ENCODE measurements at regions of chr3 and their contacts with region 1.

Region 1: DNA sequence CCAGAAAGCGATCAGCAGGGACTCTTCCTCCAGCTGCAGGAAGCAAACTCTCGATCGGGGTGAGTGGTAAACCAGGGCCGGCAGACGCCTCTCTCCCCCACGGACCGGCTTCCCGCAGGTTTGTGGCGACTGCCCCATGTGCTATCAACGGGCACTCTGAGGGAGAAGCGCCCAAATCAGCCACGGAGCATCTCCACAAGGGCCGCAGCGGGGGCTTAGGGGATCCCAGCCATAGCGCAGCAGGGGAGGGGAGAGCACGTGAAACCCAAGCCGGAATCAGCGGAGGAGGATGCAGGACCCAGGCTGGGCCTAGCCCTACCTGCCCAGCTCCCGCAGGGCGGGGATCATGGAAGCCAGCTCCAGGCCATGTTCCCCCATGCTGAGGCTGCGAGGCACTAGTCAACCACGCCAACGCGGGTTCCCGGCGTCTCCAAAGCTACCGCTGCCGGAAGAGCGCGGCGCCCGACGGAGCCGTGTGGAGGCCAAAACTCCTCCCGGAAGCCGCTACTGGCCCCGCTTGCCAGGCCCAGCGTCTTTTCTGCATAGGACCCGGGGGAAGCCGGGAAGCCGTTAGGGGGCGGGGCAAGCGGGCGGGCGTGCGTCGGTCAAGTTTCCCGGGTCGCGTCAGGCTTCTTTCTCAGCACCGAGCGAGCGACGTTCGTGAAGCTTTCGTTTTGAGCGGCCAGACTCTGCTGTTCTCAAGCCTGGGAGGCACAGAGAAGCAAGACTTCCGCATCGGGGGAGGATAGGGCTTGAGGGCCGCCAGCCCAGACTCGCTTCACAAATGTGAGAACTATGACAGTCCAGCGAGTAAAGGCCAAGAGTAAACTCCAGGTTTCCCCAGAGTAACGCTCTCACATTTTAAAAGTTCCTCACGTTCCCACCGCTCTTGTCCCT is at the start of gene ATR:
- DNase-seq: peak; percentile 98
- H3K4me3 Mint-ChIP-seq: peak within 1 kb of the TSS; percentile 98
- H3K27ac Mint-ChIP-seq: peak within 1 kb of the TSS; percentile 94
- H3K4me1 Mint-ChIP-seq: peaks cover 43% of the 10 kb centered on the region
- H3K27me3 Mint-ChIP-seq: no peaks in the 10 kb centered on the region
- total RNA-seq, gene ATR: 41.6 to 42.3 TPM

Region 2: DNA sequence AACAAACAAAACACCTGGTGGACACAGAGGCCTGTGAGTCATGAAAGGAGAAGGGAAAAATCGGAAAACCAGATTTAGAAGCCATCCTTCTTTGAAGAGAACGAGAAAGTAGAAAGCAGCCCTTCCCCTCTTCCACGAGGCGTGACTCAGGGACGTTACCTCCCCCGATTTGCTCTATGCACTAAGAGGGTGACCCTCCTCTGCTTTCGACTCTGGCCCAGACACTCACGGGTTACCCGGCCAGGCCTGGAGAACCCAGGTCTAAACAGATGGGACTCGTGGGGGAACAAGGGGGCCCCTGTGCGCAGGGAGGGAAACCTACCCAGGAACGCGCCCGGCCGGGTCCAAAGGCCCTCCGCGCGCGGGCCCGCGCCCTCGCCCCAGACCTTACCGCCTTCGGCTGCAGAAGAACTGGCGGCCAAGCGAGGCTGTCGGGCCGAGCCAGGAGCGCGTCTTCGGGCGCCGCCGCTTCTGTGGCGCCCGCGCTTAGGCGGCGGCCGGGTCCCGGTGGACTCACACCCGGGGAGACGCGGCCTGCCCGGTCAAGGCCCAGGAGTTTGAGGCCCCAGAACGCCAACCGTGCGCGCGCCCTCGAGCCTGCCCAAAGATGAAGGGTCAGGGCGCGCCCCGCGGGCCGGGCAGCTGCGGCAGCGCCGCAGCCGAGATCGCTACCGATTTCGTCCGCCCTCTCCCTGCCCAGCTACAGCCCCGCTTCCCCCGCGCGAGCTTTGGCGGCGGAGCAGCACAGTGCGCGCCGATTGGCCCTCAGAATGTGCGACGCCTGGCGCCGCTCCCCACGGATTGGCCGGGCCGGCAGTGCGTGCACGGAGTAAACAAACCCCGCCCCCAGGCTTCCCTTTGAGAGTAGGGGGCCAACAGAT is 429.5 kb before region 1 on chr3 and contains the start of gene TFDP2:
- CTCF ChIA-PET with region 1: no interaction called
- POLR2A ChIA-PET with region 1: no interaction called
- intact Hi-C with region 1: loop called (anchors 1 kb)
- DNase-seq: peak; percentile 90
- H3K4me3 Mint-ChIP-seq: peak within 1 kb of the TSS; percentile 79
- H3K27ac Mint-ChIP-seq: no peak within 1 kb of the TSS
- H3K4me1 Mint-ChIP-seq: peaks cover 26% of the 10 kb centered on the region
- H3K27me3 Mint-ChIP-seq: no peaks in the 10 kb centered on the region
- total RNA-seq, gene TFDP2: 19.1 to 21.5 TPM

Region 3: DNA sequence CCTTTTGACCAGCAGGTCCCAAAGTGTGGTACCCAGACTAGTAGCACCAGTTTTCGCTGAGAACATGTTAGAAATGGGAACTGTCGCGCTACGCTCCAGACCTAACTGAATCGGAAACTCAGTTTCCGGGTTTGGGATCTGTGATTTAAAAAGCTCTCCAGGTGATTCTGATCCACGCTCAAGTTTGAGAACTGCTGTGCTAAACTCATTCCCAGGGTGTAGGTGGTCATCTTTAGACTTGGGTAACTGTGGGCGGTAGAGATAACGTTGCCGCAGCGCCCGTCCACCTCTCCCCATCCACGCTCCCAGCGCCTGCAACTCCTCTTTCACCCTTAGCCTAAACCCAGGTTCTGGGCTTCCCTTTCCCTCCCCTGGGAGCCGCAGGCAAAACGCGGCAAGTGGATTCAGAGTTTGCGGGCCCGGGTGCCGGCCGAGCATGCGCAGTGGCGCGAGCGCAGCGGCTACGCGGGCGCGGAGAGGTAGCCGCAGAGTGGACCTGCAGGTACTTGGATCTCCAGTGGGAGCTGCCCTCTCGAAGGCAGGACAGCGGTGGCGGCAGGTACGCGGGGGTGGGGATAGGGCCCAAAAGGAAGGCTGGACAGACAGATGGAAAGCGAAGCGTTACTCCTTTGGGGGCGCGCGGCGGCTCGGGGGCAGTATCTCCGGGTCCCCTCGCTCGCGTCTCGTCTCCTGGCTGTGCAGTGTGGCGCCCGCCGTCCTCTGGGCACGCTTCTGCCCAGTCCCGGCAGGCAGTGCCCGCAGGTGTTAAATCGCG is 17.6 kb after region 1 on chr3 and contains the start of gene PLS1:
- CTCF ChIA-PET with region 1: interaction called, 5 read pairs
- POLR2A ChIA-PET with region 1: interaction called, 18 read pairs
- intact Hi-C with region 1: loop called (anchors 1 kb)
- DNase-seq: peak; percentile 91
- H3K4me3 Mint-ChIP-seq: peak within 1 kb of the TSS; percentile 89
- H3K27ac Mint-ChIP-seq: peak within 1 kb of the TSS; percentile 63
- H3K4me1 Mint-ChIP-seq: peaks cover 10% of the 10 kb centered on the region
- H3K27me3 Mint-ChIP-seq: peaks cover 3% of the 10 kb centered on the region
- total RNA-seq, gene PLS1: 4.5 to 5.7 TPM

Region 4: DNA sequence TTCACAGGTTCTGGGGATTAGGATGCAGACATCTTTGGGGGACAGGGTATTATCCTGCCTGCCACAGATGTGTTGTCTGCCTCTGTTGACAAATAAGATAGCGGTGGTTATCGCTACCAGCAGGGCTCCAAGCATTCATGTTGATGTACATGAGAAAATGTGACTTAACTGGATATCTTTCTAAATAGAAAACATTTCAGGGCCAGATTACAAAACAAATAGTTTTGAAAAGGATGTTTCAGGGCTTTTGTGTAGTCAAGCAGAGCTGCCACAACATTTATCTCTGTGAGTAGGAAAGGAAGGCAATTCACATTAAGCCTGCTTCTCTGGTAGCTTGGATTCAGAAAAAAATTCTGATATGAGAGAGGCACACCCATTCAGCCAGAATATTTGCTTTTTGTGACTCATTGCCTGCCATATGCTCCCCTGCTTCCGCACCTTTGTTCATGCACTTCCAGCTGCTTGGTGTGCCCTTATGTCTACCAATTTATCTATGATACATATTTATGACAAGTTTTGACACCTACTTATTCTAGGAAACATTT is 40.4 kb after region 1 on chr3:
- CTCF ChIA-PET with region 1: no interaction called
- POLR2A ChIA-PET with region 1: no interaction called
- intact Hi-C with region 1: no loop called
- DNase-seq: no peak
- H3K4me3 Mint-ChIP-seq: no peak overlapping the region
- H3K27ac Mint-ChIP-seq: no peak overlapping the region
- H3K4me1 Mint-ChIP-seq: no peaks in the 10 kb centered on the region
- H3K27me3 Mint-ChIP-seq: no peaks in the 10 kb centered on the region

Region 5: GRCh38 chr3:143001369-143002082 is 423.0 kb after region 1 on chr3 and contains the start of gene U2SURP:
- CTCF ChIA-PET with region 1: interaction called, 3 read pairs
- POLR2A ChIA-PET with region 1: interaction called, 26 read pairs
- intact Hi-C with region 1: loop called (anchors 2 kb)
- DNase-seq: peak; percentile 95
- H3K4me3 Mint-ChIP-seq: peak within 1 kb of the TSS; percentile 88
- H3K27ac Mint-ChIP-seq: peak within 1 kb of the TSS; percentile 96
- H3K4me1 Mint-ChIP-seq: peaks cover 34% of the 10 kb centered on the region
- H3K27me3 Mint-ChIP-seq: no peaks in the 10 kb centered on the region
- total RNA-seq, gene U2SURP: 178 to 182 TPM

Measured in activated CD4-positive, alpha-beta memory T cell treated with anti-CD3 and anti-CD28 coated beads for 36 hours (primary cell).